ENCODE measurements at regions of chr17 and their contacts with region 1.

Region 1: GRCh38 chr17:80454557-80455335 is 21.7 kb downstream of the NPTX1 start:
- DNase-seq: peak; percentile 95 to 97
- H3K4me3 ChIP-seq: peak overlapping the region; percentile 58 to 89 (median 72)
- H3K27ac ChIP-seq: peak overlapping the region; percentile 96 to 98
- H3K4me1 ChIP-seq: no peaks in the 10 kb centered on the region
- H3K27me3 ChIP-seq: no peaks in the 10 kb centered on the region
- CTCF ChIP-seq: peak in 1 of 3 donors; percentile 12
- POLR2A ChIP-seq: peak; percentile 78

Region 2: GRCh38 chr17:79645022-79645776 is 809.5 kb before region 1 on chr17:
- intact Hi-C with region 1: no loop called
- DNase-seq: peak in 1 of 2 donors; percentile 20
- H3K4me3 ChIP-seq: no peak overlapping the region
- H3K27ac ChIP-seq: no peak overlapping the region
- H3K4me1 ChIP-seq: no peaks in the 10 kb centered on the region
- H3K27me3 ChIP-seq: peaks cover 0 to 7% of the 10 kb centered on the region in 2 donors
- CTCF ChIP-seq: no peak
- POLR2A ChIP-seq: no peak

Region 3: GRCh38 chr17:80475949-80476876 is 21.5 kb after region 1 on chr17 and contains the start of gene NPTX1:
- intact Hi-C with region 1: loop called (anchors 1 kb)
- DNase-seq: no peak
- H3K4me3 ChIP-seq: peak within 1 kb of the TSS; percentile 4 to 67 (median 33)
- H3K27ac ChIP-seq: no peak within 1 kb of the TSS
- H3K4me1 ChIP-seq: peaks cover 27 to 28% of the 10 kb centered on the region in 2 donors
- H3K27me3 ChIP-seq: peaks cover 33 to 86% of the 10 kb centered on the region in 2 donors
- CTCF ChIP-seq: no peak
- POLR2A ChIP-seq: no peak
- total RNA-seq, gene NPTX1: under 0.01 to 0.32 (median 0.29) TPM